PC-3 (cell line): ENCODE measurements at regions of chr2 and their contacts with region 1.

Region 1: GRCh38 chr2:187499941-187500532 is 52.0 kb upstream of the CALCRL start:
- DNase-seq: peak; percentile 85
- ATAC-seq: peak; percentile 18; the same call in 1 of the 2 replicates
- H3K4me3 ChIP-seq: no peak overlapping the region
- H3K27ac ChIP-seq: peak overlapping the region; percentile 95
- H3K4me1 ChIP-seq: peaks cover 41% of the 10 kb centered on the region
- H3K27me3 ChIP-seq: no peaks in the 10 kb centered on the region
- CTCF ChIP-seq: peak; percentile 80

Region 2: DNA sequence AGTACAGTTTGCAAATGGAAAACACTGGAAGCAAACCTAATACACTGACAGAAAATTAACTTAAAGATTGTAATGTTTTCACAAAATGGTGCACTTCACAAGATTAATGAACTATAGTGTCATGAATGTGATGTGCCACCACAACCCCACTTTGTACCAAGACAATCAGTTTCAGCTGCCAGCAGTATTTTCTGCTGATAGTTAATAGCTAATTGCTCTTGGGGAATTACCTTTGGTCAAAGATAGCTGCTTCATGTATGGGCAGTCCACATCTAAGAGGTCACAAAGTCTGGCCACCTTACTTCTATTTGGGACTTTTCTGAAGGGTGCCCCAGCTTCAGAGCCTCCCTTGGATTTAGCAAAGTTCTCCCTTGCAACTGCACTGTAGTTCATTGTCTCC is 306.0 kb before region 1 on chr2:
- CTCF ChIA-PET with region 1: no interaction called
- POLR2A ChIA-PET with region 1: no interaction called
- intact Hi-C with region 1: no loop called
- DNase-seq: no peak
- ATAC-seq: no peak
- H3K4me3 ChIP-seq: no peak overlapping the region
- H3K27ac ChIP-seq: no peak overlapping the region
- H3K4me1 ChIP-seq: no peaks in the 10 kb centered on the region
- H3K27me3 ChIP-seq: 0 out of 2 replicates have a peak, but pooled peaks cover 5% of the 10 kb centered on the region
- CTCF ChIP-seq: no peak

Region 3: GRCh38 chr2:187215532-187216240 is 284.4 kb before region 1 on chr2:
- CTCF ChIA-PET with region 1: no interaction called
- POLR2A ChIA-PET with region 1: no interaction called
- intact Hi-C with region 1: no loop called
- DNase-seq: no peak
- ATAC-seq: no peak
- H3K4me3 ChIP-seq: no peak overlapping the region
- H3K27ac ChIP-seq: no peak overlapping the region
- H3K4me1 ChIP-seq: no peaks in the 10 kb centered on the region
- H3K27me3 ChIP-seq: no peaks in the 10 kb centered on the region
- CTCF ChIP-seq: no peak

Region 4: GRCh38 chr2:187442378-187442777 is 57.7 kb before region 1 on chr2:
- CTCF ChIA-PET with region 1: no interaction called
- POLR2A ChIA-PET with region 1: no interaction called
- intact Hi-C with region 1: no loop called
- DNase-seq: no peak
- ATAC-seq: no peak
- H3K4me3 ChIP-seq: no peak overlapping the region
- H3K27ac ChIP-seq: no peak overlapping the region
- H3K4me1 ChIP-seq: no peaks in the 10 kb centered on the region
- H3K27me3 ChIP-seq: no peaks in the 10 kb centered on the region
- CTCF ChIP-seq: no peak; the same call in 1 of the 2 replicates

Region 5: DNA sequence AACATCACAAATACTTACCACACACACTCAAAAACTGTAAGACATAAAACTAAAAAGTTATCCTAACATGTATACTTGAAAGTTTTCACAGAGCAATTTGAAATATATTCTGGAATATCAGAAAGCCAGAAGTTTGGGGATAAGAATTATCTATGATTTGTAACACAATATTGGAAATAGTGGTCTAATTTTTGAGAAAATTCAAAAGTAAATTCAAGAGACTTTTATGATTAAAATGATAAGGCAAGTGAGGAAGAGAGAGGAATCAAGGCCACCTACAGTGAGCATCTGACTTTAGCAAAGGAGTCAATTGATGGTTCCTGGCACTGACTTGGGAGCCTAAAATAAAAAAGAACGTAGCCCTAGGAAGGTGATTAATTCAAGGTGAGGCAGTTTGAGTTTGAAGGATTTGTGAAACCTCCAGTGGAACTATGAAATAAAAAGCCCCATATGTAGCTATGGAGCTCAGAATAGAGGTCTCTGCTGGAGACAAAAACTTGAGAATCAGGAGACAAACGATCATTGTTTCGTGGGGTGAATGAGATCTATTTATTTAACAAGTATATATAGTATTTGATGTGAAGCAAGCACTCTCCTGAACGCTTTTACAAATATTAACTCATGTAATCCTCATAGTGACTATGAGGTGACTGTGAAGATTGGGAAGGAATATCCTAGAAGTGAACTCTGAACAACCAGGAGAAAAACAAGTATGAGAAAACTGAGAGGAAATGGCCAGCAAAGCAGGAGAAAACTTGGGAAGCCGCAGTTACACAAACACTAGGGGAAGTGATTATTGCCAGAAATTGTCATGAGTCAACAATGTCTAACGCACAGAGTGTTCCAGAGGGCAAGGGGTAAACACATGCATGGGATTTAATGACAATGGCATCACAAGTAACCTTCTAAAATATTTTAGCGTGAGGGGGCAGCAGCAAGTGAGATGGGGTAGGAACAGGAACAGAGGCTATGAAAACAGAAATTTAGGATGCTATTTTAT is 41.3 kb after region 1 on chr2:
- CTCF ChIA-PET with region 1: interaction called, 3 read pairs
- POLR2A ChIA-PET with region 1: no interaction called
- intact Hi-C with region 1: loop called (anchors 1 kb)
- DNase-seq: peak; percentile 94
- ATAC-seq: peak; percentile 67
- H3K4me3 ChIP-seq: peak overlapping the region; percentile 28; the same call in 1 of the 2 replicates
- H3K27ac ChIP-seq: peak overlapping the region; percentile 97
- H3K4me1 ChIP-seq: peaks cover 71% of the 10 kb centered on the region
- H3K27me3 ChIP-seq: no peaks in the 10 kb centered on the region
- CTCF ChIP-seq: no peak; the same call in 1 of the 2 replicates

Region 6: DNA sequence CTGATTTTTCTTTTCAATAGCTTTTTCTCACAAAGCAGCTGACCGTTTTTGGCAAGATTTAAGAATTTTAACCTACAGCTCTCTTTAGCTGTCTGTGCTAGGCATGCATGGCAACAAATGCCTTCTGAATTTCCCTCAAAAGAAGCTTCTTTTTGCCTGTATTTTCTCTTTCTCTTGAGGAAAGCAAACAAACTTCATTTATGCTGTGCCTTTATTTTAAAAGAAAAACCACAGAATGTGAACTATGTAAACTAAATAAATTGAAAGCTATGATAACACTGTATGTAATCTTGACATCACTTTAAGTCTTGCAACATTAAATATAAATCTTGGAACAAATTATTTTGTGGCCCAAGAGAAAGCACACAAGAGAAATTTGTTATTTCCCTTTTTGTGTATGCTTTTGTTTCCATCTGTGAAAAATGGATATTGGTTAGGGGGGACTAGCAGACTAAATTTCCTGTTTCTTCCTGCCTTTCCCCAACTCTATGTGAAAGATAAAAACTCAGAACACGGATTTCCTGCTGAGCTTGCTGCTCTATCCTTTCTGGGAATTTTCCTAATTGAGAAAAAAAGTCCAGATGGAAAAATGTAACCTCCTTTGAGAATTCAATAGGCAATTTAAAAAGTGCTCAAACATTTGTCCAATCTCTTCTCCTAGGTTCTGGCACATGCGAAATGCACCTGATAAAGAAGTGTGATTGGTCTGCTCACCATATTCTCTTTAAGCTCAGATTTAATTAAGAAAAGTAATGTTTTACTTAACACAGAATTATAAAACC is 75.1 kb after region 1 on chr2:
- CTCF ChIA-PET with region 1: interaction called, 37 read pairs
- POLR2A ChIA-PET with region 1: interaction called, 6 read pairs
- intact Hi-C with region 1: loop called (anchors 1 kb)
- DNase-seq: peak; percentile 44
- ATAC-seq: peak; percentile 63
- H3K4me3 ChIP-seq: no peak overlapping the region
- H3K27ac ChIP-seq: peak overlapping the region; percentile 75
- H3K4me1 ChIP-seq: peaks cover 26% of the 10 kb centered on the region
- H3K27me3 ChIP-seq: no peaks in the 10 kb centered on the region
- CTCF ChIP-seq: no peak

Region 7: GRCh38 chr2:187774551-187775071 is 274.6 kb after region 1 on chr2:
- CTCF ChIA-PET with region 1: no interaction called
- POLR2A ChIA-PET with region 1: no interaction called
- intact Hi-C with region 1: loop called (anchors 2 kb)
- DNase-seq: peak; percentile 57
- ATAC-seq: peak; percentile 90
- H3K4me3 ChIP-seq: no peak overlapping the region
- H3K27ac ChIP-seq: no peak overlapping the region
- H3K4me1 ChIP-seq: peaks cover 8% of the 10 kb centered on the region
- H3K27me3 ChIP-seq: no peaks in the 10 kb centered on the region
- CTCF ChIP-seq: no peak

Region 8: DNA sequence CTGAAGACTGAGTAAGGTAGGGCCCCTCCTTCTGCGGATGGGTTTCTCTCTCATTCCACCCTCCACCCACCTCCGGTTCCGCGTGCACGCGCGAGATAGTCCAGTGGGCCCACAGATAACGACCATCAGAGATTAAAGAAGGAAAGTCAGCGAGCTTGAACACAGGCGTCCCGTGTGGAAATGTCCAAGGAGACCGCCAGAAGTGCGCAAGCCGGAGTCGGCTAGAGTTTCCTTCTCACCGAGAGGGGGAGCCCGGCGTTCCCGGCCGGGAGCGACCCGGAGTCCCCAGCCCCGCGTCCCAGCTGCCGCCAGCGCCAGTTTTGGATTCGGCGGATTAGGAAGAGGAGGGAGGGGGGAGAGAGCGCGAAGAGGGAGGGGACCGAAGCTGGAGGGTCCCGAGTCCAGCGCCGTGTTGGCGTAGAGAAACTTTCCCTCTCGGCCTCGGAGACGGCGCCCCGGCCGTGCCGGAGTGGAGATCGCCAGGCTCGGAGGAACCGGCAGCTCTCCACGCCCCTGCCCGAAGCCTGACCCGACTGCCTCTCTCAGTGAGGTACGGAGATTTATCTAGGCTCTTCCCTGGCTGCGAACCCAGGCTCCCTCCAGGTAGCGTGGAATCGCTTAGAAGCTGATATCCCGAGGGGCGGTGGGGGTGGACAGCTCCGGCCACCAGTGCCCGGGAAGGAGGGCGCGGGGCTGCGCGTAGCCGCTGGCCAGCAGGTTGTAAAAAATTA is 791.7 kb after region 1 on chr2 and contains the start of gene GULP1:
- CTCF ChIA-PET with region 1: no interaction called
- POLR2A ChIA-PET with region 1: no interaction called
- intact Hi-C with region 1: loop called (anchors 5 kb)
- DNase-seq: peak; percentile 75
- ATAC-seq: peak; percentile 45
- H3K4me3 ChIP-seq: peak within 1 kb of the TSS; percentile 87
- H3K27ac ChIP-seq: peak within 1 kb of the TSS; percentile 83
- H3K4me1 ChIP-seq: peaks cover 33% of the 10 kb centered on the region
- H3K27me3 ChIP-seq: no peaks in the 10 kb centered on the region
- CTCF ChIP-seq: peak; percentile 77
- total RNA-seq, gene GULP1: 23.1 and 25.5 TPM in 2 replicates

Region 9: DNA sequence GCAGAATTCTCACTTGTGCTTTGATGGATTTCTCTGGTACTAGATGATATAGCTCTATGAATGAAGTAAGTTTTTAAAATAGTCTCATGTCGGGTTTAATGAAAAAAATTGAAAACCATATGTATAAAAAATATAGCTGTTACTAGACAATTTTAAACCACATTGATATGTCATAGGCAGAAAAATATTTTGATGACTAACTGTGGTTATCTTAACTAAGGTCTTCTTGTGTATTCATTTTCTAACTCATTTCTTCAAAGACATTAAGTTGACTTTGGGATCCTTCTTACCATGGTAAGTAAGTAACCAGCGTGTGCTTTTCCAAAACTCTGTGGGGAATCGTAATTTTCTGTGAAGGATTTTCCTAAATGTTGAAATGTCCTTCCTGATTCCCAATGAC is 1313.3 kb after region 1 on chr2:
- CTCF ChIA-PET with region 1: interaction called, 10 read pairs
- POLR2A ChIA-PET with region 1: no interaction called
- intact Hi-C with region 1: no loop called
- DNase-seq: peak; percentile 34
- ATAC-seq: no peak
- H3K4me3 ChIP-seq: no peak overlapping the region
- H3K27ac ChIP-seq: no peak overlapping the region
- H3K4me1 ChIP-seq: no peaks in the 10 kb centered on the region
- H3K27me3 ChIP-seq: no peaks in the 10 kb centered on the region
- CTCF ChIP-seq: no peak